Psoas muscle (tissue), 8 donors: ENCODE measurements at regions of chr6 and their contacts with region 1.

Region 1: GRCh38 chr6:134174672-134175198 is 122.3 kb upstream of the SLC2A12 start:
- DNase-seq: peak; percentile 93 to 97
- ATAC-seq: peak; percentile 77 to 84 (median 80)
- H3K4me3 ChIP-seq: peak overlapping the region; percentile 90
- H3K27ac ChIP-seq: peak overlapping the region; percentile 98
- H3K4me1 ChIP-seq: peaks cover 44% of the 10 kb centered on the region
- H3K27me3 ChIP-seq: no peaks in the 10 kb centered on the region
- CTCF ChIP-seq: peak; percentile 7

Region 2: GRCh38 chr6:134347916-134348805 is 173.4 kb after region 1 on chr6:
- intact Hi-C with region 1: loop called in 1 of 2 experiments (anchors 1 kb)
- DNase-seq: peak; percentile 72 to 75
- ATAC-seq: peak; percentile 78 to 81 (median 79)
- H3K4me3 ChIP-seq: peak overlapping the region; percentile 48
- H3K27ac ChIP-seq: peak overlapping the region; percentile 92
- H3K4me1 ChIP-seq: peaks cover 37% of the 10 kb centered on the region
- H3K27me3 ChIP-seq: no peaks in the 10 kb centered on the region
- CTCF ChIP-seq: no peak

Region 3: DNA sequence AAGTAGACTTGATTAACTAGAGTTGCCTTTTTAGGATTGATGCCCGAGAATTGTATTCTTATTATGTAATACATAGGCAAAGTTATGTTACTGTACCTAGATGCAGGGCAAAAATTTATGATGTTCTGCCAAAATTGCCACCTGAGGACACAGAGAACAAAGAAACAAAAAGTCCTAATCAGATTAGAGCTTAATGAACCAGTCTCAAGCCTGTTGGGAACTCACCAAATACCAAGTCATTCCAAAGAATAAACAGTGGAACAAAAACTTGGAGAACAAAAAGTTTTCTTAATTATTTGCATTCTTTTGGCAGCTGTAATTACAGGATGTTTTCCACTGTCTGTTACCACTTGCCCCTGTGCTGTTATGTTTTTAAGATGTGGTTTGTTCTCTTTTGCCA is 297.9 kb after region 1 on chr6:
- intact Hi-C with region 1: loop called in 1 of 2 experiments (anchors 5 kb)
- DNase-seq: no peak
- ATAC-seq: no peak
- H3K4me3 ChIP-seq: no peak overlapping the region
- H3K27ac ChIP-seq: peak overlapping the region; percentile 87
- H3K4me1 ChIP-seq: peaks cover 25% of the 10 kb centered on the region
- H3K27me3 ChIP-seq: no peaks in the 10 kb centered on the region
- CTCF ChIP-seq: no peak

Region 4: GRCh38 chr6:134640975-134641429 is 466.3 kb after region 1 on chr6:
- intact Hi-C with region 1: loop called (anchors 1 to 2 kb)
- DNase-seq: peak; percentile 76 to 86
- ATAC-seq: peak; percentile 95 to 98 (median 96)
- H3K4me3 ChIP-seq: no peak overlapping the region
- H3K27ac ChIP-seq: peak overlapping the region; percentile 75
- H3K4me1 ChIP-seq: peaks cover 20% of the 10 kb centered on the region
- H3K27me3 ChIP-seq: no peaks in the 10 kb centered on the region
- CTCF ChIP-seq: peak; percentile 97

Region 5: DNA sequence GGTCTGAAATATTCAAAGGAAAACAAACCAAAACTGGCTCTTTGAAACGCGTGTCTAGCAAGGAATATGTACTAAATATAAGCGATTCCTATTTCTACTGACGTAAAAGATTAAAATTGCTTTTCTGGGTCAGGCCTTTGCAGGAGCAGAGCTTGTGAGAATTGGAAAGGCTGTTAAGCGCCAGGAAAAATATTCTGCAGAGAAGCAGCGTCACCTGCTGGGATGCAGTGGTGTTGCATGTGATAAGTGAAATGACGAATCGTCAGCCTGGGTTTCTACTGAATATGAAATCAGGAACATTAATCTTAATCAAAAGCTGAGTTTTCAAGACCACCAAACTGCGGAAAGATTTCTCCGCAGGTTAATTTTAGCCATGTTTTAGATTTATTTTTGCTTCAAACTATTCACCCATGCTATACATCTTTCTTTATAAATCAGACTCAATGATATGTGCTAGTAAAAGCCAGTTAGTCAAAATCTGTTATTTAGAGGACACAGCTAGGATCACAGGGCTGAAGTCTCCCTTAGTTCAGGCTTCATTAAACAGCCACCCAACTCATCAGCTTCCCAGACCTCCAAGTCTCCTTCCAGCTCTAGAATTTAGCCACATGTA is 707.8 kb after region 1 on chr6:
- intact Hi-C with region 1: loop called in 1 of 2 experiments (anchors 5 kb)
- DNase-seq: peak; percentile 48 to 65
- ATAC-seq: peak; percentile 73 to 94 (median 91)
- H3K4me3 ChIP-seq: no peak overlapping the region
- H3K27ac ChIP-seq: no peak overlapping the region
- H3K4me1 ChIP-seq: peaks cover 4% of the 10 kb centered on the region
- H3K27me3 ChIP-seq: no peaks in the 10 kb centered on the region
- CTCF ChIP-seq: peak; percentile 98